Endothelial cell of umbilical vein (primary cell): ENCODE measurements at regions of chr15 and their contacts with region 1.

Region 1: DNA sequence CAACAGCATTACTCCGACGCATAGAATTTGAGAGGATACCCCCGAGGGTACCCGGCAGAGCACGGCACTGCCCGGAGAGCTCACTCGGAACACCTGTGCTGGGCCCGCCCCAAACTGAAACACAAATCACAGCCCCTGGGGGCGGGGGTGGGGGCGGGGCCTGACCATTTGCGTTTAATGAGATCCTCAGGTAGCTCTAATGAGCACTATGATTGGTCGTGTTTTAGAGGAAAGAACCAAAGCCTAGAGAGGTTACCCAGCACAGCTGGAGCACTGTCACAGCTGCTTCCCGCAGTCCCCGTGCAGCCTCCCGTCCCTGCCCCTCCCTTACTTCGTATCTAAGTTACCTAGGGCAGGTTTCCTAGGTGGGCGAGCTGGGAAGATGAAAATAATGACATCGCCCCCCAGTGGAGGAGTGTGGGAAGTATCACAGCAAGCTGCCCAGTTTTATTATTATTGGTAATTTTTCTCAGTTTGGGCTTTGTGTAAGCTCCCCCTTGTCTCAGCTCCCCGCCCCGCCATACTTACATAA is 187.1 kb downstream of the PDE8A start:
- DNase-seq: peak; percentile 55
- H3K4me3 ChIP-seq: peak overlapping the region in 2 of 3 experiments; percentile 10 to 32
- H3K27ac ChIP-seq: no peak overlapping the region
- H3K4me1 ChIP-seq: no peaks in the 10 kb centered on the region
- H3K27me3 ChIP-seq: no peaks in the 10 kb centered on the region
- CTCF ChIP-seq: peak; percentile 58 to 63
- POLR2A ChIP-seq: no peak

Region 2: GRCh38 chr15:85142312-85142711 is 26.4 kb before region 1 on chr15:
- CTCF ChIA-PET with region 1: interaction called, 32 read pairs
- POLR2A ChIA-PET with region 1: no interaction called
- dilution Hi-C with region 1: no loop called
- intact Hi-C with region 1: no loop called
- DNase-seq: peak; percentile 91
- H3K4me3 ChIP-seq: no peak overlapping the region
- H3K27ac ChIP-seq: peak overlapping the region; percentile 46
- H3K4me1 ChIP-seq: peaks cover 13% of the 10 kb centered on the region
- H3K27me3 ChIP-seq: no peaks in the 10 kb centered on the region
- CTCF ChIP-seq: no peak
- POLR2A ChIP-seq: no peak

Region 3: DNA sequence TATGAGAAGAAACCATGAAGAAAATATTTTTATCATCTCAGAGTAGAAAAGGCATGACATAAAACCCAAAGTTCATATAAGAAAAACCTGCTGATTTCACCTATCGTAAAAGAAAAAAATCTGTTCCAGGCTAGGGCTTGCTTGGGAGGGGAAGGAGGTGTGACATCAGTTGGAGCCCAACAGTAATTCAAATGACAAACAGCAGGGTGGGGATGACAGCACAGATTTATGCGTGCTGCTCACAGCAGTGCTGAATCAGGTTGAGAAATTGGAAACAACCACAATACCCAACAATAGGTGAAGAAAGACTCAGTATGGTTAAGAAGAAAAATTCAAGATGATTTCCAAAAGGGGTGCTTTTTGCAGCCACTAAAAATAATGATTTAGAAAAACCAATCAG is 14.6 kb before region 1 on chr15:
- CTCF ChIA-PET with region 1: interaction called, 11 read pairs
- POLR2A ChIA-PET with region 1: no interaction called
- dilution Hi-C with region 1: no loop called
- intact Hi-C with region 1: no loop called
- DNase-seq: no peak
- H3K4me3 ChIP-seq: no peak overlapping the region
- H3K27ac ChIP-seq: no peak overlapping the region
- H3K4me1 ChIP-seq: no peaks in the 10 kb centered on the region
- H3K27me3 ChIP-seq: peaks cover 0 to 4% of the 10 kb centered on the region in 2 experiments
- CTCF ChIP-seq: no peak
- POLR2A ChIP-seq: no peak